ENCODE measurements at regions of chr1 and their contacts with region 1.

Region 1: DNA sequence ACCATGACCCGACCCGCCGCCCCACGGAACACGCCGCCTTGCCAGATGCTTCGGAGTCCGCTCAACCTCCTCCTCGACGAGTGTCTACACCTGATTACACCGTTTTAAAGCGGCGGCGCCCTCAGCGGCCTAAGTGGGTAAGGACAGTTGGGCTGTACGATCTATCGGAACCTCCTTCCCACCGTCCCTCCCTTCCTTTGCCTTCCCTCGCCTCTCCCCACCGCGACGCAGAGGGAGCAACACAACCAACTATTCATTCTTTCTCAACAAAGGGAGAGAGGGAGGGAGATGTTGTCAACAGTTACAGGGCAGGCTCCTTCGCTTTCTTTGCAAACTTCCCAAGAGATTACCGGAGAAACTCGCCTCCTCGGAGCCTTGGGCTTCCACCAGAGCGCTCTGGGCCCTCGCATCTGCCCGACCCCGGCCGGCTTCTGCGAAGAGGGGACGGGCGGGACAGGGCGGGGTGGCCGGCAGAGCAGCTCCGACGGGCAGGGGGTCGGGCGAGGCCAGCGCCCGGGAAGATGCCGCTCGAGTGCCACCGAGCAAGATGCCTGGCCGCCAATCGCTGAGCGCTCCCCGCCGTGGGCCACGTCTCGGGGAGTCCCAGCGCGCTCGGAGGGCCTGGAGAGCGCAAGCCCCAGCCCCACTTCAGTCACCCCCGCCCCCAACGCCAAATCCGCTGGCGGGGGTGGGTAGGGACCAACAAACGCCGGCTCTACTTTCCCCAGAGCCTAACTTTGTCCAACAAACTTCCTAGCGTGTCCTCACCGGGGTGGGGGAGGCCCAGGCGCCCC is 683 bp downstream of the BCAR3 start:
- DNase-seq: peak; percentile 85

Region 2: DNA sequence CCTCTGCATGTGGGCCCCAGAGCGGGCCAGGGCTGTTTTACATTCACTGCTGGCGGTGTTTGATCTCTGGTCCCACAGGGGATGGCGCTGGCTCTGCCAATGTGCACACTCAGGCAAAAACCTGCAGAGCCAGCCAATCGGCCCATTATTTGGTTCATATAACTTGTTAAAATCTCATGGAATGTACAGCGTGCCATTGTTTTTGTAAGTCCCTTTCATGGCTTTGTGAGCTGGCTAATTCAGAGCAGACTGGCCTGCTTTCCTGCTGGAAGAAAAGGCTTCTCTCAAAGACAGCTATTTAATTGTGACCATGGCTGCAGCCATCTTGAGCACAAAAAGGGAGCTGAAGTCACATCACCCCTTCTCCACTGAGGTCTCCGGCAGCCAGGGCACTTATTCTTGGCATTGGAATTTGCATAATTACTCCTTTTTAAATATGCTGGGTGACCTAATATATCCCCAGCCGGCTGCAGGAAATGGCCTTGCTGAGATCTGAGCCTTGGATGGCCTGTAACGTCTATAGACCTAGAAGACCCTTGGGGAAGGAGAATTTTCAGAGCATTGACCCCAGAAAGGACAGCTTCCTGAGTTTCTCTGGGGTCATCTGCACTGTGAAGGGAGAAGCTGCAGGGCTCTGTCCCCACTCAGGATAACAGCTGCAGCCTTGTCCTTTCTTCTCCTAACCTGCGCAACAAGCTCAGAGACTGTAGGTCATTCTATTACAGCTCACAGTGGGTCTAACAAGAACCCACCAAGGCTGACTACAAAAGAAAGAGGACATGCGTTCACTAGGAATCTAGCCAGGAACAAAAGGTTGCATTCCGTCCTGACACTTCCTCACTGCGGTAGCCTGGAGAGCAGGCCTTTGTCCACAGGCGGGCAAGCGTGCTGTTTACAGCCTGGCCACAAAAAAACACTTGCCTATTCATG is 45.1 kb before region 1 on chr1:
- intact Hi-C with region 1: loop called (anchors 2 kb)
- DNase-seq: no peak

Region 3: GRCh38 chr1:93814059-93814794 is 133.3 kb after region 1 on chr1:
- intact Hi-C with region 1: loop called (anchors 5 kb)
- DNase-seq: no peak